Right ventricle myocardium superior (tissue), 1 donor: ENCODE measurements at regions of chr14 and their contacts with region 1.

Region 1: DNA sequence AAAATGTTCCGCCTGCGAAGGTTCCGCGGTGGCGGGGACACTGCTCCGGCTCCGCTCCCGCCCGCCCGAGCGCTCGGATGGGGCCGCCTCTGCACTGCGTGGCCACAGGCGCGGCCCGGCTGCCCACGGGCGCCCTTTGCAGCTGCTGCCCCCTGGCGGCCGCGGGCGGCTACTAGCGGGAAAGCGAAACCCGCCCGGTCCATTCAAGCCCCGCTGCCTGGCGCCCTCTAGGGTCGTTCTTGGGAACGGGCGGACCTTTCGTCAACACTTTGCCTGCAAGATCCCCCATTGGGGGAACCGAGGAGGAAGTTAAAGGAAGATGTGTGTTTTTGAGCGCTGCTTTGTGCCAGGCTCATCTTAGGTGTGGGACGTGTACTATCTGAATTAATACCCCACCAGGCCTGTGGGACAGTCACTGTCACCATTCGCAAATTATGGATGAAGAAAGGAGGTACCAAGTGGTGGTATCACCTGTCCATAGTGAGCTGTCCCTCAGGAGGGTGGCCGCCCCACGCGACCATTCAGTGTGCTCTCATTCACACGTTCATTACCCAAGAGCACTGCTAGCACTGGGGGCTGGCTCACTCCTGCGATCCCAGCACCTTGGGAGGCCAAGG is 19.4 kb downstream of the GPR132 start:
- DNase-seq: peak; percentile 94
- ATAC-seq: peak; percentile 97

Region 2: GRCh38 chr14:104976198-104977007 is 69.4 kb before region 1 on chr14:
- intact Hi-C with region 1: loop called (anchors 2 kb)
- DNase-seq: peak; percentile 91
- ATAC-seq: peak; percentile 77

Region 3: DNA sequence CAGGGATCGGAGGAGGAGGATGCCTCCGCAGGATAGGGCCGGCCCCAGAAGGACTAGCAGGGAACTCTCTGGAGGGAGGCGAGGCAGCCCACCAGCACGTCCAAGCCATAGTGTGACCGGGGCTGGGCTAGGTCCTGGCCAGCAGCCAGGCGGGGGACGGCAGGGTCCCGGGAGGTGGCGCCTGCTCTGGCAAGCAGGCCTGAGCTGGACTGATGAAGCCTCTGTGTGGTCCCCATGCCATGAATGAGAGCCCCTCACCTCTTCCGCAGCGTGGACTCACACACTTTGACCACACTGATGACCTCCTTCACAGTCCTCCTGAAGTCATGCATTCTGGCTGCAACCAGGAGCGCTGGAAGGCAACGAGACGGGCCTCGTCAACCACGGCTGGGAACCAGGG is 182.7 kb after region 1 on chr14:
- intact Hi-C with region 1: no loop called
- DNase-seq: no peak
- ATAC-seq: peak; percentile 29